HCT116 (cell line): ENCODE measurements at regions of chr19 and their contacts with region 1.

Region 1: GRCh38 chr19:19192078-19192882 is at the starts of genes BORCS8 and RFXANK:
- DNase-seq: peak; percentile 98
- ATAC-seq: peak; percentile 90
- H3K4me3 ChIP-seq: peak within 1 kb of the TSS; percentile 98 to 99
- H3K27ac ChIP-seq: peak within 1 kb of the TSS; percentile 94
- H3K4me1 ChIP-seq: peaks cover 16 to 22% of the 10 kb centered on the region in 2 experiments; a peak in 3 of 4 replicates
- H3K27me3 ChIP-seq: no peaks in the 10 kb centered on the region
- CTCF ChIP-seq: no peak
- POLR2A ChIP-seq: peak; percentile 63
- RAD21 ChIP-seq: no peak
- total RNA-seq, gene BORCS8: 17.1 TPM
- total RNA-seq, gene RFXANK: 78.9 TPM

Region 2: DNA sequence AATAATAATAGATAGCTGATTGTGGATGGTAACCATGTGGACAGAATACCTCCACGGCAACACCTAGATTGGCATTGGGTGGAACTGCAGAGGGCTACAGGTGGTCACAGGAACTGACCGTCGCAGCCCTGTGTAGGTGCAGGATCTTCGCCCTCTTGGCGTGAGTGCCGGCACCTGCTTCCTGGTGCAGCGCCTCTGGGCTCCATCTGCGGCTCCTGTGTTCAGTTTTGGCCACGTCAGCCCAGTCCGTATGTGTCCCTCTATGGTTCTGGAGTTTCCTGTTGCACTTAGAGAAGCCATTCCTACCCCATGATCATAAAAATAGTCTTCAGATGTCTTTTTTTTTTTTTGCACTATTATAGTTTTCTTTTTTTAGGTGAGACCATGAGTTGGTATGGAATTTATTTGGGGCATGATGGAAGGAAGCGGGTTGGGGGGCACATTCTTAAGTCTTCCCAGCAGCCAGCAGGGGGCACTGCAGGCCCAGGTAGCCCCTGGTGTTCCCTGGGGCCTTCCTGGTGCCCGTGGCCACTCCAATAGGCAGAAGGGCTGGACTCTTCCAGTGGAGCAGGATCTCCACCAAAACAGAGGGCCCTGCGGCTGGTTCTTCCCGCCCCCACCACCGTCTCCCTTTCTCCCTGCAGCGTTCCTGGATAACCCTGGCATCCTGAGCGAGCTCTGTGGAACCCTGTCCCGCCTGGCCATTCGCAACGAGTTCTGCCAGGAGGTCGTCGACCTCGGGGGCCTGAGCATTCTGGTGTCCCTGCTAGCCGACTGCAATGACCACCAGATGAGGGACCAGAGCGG is 138.6 kb before region 1 on chr19:
- CTCF ChIA-PET with region 1: no interaction called
- POLR2A ChIA-PET with region 1: no interaction called
- RAD21 ChIA-PET with region 1: no interaction called
- intact Hi-C with region 1: no loop called
- DNase-seq: peak; percentile 57
- ATAC-seq: peak; percentile 88
- H3K4me3 ChIP-seq: no peak overlapping the region
- H3K27ac ChIP-seq: no peak overlapping the region
- H3K4me1 ChIP-seq: no peaks in the 10 kb centered on the region
- H3K27me3 ChIP-seq: no peaks in the 10 kb centered on the region
- CTCF ChIP-seq: peak; percentile 77 to 86 (median 84)
- POLR2A ChIP-seq: no peak
- RAD21 ChIP-seq: peak; percentile 94

Region 3: GRCh38 chr19:19155495-19156219 is 36.6 kb before region 1 on chr19:
- CTCF ChIA-PET with region 1: no interaction called
- POLR2A ChIA-PET with region 1: no interaction called
- RAD21 ChIA-PET with region 1: no interaction called
- intact Hi-C with region 1: no loop called
- DNase-seq: no peak
- ATAC-seq: no peak
- H3K4me3 ChIP-seq: no peak overlapping the region
- H3K27ac ChIP-seq: no peak overlapping the region
- H3K4me1 ChIP-seq: no peaks in the 10 kb centered on the region
- H3K27me3 ChIP-seq: no peaks in the 10 kb centered on the region
- CTCF ChIP-seq: no peak
- POLR2A ChIP-seq: no peak
- RAD21 ChIP-seq: no peak

Region 4: DNA sequence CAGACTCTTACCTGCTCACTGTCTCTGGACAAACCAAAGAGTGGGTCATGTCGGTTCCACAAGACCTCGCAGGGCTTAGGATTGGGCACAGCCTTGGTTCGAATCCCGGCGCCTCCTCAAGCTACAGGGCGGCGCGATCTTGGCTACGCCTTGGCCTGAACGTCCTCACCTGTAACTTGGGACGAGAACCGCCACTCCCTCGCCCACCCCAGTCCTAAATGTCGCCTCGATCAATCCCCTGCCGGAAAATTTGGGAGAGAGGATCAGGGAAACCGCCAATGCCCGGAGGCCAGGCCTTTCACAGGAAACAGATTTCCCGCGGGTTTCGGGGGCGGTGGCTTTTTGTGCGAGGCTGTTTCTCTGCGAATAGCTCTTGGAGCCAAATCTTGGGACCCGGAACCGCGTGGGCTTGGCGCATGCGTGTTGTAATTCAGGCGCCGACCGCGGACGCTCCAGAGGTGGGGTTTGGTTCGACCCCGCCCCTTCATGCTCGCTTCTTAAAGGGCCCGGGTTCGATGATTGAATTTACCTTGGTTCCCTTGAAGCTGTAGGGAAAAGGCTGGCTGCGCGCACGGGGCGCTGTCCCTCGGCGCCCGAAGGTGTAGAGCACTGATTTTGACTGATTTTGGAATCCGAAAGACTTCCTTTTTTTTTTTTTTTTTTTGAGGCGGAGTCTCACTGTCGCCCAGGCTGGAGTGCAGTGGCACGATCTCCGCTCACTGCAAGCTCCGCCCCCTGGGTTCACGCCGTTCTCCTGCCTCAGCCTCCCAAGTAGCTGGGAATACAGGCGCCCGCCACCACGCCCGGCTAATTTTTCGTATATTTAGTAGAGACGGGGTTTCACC is 11.0 kb after region 1 on chr19 and contains the start of gene NR2C2AP:
- CTCF ChIA-PET with region 1: no interaction called
- POLR2A ChIA-PET with region 1: interaction called, 15 read pairs
- RAD21 ChIA-PET with region 1: no interaction called
- intact Hi-C with region 1: loop called (anchors 1 kb)
- DNase-seq: peak; percentile 93
- ATAC-seq: peak; percentile 89
- H3K4me3 ChIP-seq: peak within 1 kb of the TSS; percentile 78 to 96
- H3K27ac ChIP-seq: peak within 1 kb of the TSS; percentile 75
- H3K4me1 ChIP-seq: peaks cover 10 to 36% of the 10 kb centered on the region in 2 experiments; a peak in 3 of 4 replicates
- H3K27me3 ChIP-seq: no peaks in the 10 kb centered on the region
- CTCF ChIP-seq: no peak
- POLR2A ChIP-seq: no peak
- RAD21 ChIP-seq: no peak
- total RNA-seq, gene NR2C2AP: 45.3 TPM